ENCODE measurements at regions of chr2 and their contacts with region 1.

Region 1: GRCh38 chr2:98649135-98649991 is 41.0 kb downstream of the UNC50 start:
- DNase-seq: peak; percentile 93
- ATAC-seq: peak; percentile 99
- H3K4me3 Mint-ChIP-seq: no peak overlapping the region
- H3K27ac Mint-ChIP-seq: peak overlapping the region; percentile 88
- H3K4me1 Mint-ChIP-seq: peaks cover 63% of the 10 kb centered on the region
- H3K27me3 Mint-ChIP-seq: no peaks in the 10 kb centered on the region
- CTCF ChIP-seq: peak; percentile 90

Region 2: DNA sequence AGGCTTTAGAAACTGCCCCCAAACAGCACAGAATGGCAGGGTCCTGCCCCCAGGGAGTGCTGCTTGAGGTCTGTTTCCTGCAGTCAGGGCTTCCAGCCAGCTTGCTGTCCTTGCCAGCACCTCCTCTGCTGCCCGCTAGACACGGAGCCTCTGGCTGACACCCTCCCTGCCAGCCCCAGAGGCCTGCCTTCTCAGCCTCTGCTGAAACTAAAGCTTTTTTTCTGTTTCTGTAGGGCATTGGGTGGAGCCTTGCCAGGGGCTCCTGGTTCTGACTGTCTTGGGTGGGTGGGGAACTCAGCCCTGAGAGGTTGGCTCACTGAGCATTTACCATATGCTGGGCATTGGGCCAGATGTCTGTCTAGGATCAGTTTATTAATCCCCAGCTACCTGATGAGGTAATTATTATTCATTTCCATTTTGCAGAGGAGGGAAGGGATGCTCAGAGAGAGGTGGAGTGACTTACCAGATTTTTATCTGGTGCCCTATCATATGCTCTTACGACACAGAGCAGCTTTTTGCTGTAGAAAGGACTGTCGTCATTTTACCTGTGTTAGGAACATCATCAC is 169.3 kb before region 1 on chr2:
- CTCF ChIA-PET with region 1: no interaction called
- POLR2A ChIA-PET with region 1: no interaction called
- intact Hi-C with region 1: no loop called
- DNase-seq: peak; percentile 76
- ATAC-seq: peak; percentile 72
- H3K4me3 Mint-ChIP-seq: peak overlapping the region; percentile 30
- H3K27ac Mint-ChIP-seq: peak overlapping the region; percentile 91
- H3K4me1 Mint-ChIP-seq: peaks cover 98% of the 10 kb centered on the region
- H3K27me3 Mint-ChIP-seq: no peaks in the 10 kb centered on the region
- CTCF ChIP-seq: no peak

Region 3: GRCh38 chr2:98634401-98635092 is 14.8 kb before region 1 on chr2:
- CTCF ChIA-PET with region 1: interaction called, 21 read pairs
- POLR2A ChIA-PET with region 1: no interaction called
- intact Hi-C with region 1: no loop called
- DNase-seq: peak; percentile 81
- ATAC-seq: peak; percentile 70
- H3K4me3 Mint-ChIP-seq: peak overlapping the region; percentile 31
- H3K27ac Mint-ChIP-seq: peak overlapping the region; percentile 90
- H3K4me1 Mint-ChIP-seq: peaks cover 37% of the 10 kb centered on the region
- H3K27me3 Mint-ChIP-seq: no peaks in the 10 kb centered on the region
- CTCF ChIP-seq: peak; percentile 69

Region 4: DNA sequence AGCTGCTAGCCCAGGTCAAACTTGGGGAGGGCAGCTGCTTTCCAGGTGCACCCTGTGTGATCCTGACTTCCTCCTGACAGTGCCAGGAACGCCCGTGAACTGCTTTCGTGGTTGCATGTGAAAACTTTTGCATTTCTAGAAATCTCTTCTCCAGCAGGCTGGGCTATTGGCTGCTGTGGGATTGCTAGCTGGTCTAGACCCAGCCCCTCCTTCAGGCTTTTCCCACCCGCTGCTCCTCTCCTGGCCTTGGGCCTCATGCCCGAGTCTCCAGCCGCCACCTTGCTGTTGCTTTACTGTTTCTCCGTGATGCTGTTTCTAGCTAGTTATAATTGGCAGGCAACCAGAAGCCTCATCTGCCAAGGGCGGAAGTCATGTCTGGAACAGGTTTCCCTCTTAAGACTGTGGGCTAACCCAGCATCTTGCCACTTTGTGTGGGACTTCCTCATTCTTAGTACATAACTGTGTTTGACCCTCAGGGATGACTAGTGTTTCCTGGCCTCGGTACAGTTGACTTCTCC is 108.6 kb after region 1 on chr2:
- CTCF ChIA-PET with region 1: interaction called, 10 read pairs
- POLR2A ChIA-PET with region 1: interaction called, 4 read pairs
- intact Hi-C with region 1: no loop called
- DNase-seq: peak; percentile 73
- ATAC-seq: peak; percentile 69
- H3K4me3 Mint-ChIP-seq: peak overlapping the region; percentile 57
- H3K27ac Mint-ChIP-seq: peak overlapping the region; percentile 89
- H3K4me1 Mint-ChIP-seq: peaks cover 50% of the 10 kb centered on the region
- H3K27me3 Mint-ChIP-seq: no peaks in the 10 kb centered on the region
- CTCF ChIP-seq: no peak

Region 5: DNA sequence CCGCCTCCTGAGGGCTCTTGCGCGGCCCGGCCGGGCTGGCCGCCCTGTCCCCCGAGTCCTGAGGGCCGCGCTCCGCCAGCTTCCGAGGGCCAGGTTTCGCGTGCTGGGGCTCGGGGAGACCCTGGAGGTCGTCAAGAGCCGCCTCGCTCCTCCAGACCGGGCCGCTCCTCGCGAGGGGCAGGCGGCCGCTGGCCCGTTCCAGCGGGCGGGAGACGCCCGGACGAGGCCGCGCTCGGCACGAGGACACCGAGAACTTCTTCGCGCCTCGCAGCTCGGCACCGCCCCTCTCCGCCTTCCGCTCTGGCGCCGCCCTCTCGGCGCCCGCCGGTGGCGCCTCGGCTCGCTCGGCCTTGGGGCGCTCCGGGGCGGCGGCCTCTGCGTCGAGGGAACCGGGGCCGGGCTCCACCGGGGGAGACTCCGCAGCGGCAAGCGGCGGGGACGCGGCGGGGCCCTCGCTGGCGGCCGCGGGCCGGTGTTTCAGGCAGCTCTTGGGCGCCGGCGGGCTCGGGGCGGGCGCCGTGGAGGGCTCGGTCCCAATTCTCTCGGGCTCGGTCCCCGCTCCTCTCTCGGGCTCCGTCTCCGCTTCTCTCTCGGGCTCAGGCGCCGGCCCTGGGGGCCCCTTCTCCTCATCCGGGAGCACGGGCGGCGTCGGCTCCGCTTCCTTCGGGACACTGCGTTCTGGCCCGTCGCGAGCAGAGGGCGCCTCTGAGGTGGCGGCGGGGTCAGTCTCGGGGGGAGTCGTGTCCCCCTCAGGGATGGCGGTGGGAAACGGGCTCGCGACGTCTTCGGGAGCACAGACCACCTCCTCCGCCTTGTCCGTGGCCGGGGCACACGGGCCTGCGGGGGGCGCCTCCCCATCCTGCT is 173.2 kb after region 1 on chr2:
- CTCF ChIA-PET with region 1: interaction called, 19 read pairs
- POLR2A ChIA-PET with region 1: interaction called, 3 read pairs
- intact Hi-C with region 1: no loop called
- DNase-seq: peak; percentile 66
- ATAC-seq: peak; percentile 93
- H3K4me3 Mint-ChIP-seq: peak overlapping the region; percentile 47
- H3K27ac Mint-ChIP-seq: no peak overlapping the region
- H3K4me1 Mint-ChIP-seq: peaks cover 13% of the 10 kb centered on the region
- H3K27me3 Mint-ChIP-seq: peaks cover 2% of the 10 kb centered on the region
- CTCF ChIP-seq: peak; percentile 45

Region 6: DNA sequence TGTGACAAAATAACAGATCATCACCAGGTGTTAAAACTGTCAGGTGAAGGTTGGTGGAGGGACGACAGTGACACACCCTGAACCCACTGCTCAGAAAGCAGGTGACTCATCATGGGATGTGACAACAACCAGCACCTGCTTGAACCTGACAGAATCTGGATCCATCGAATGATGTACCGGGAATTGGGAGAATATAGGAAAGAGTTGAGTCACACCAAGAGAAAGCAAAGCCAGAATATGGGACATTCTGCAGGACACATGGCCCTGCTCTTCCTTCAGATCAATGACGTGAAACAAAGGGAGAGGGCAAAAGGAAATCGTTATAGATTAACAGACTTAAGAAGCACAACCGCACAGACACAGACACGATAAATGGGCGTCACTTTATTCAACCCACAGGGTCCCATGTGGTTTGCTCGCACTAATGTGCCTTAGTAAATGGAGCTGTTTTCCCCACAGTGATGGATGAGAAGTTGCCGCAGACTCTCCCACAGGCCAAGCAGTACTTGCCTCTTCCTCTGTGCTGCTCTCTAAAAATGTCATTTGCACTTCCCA is 186.5 kb after region 1 on chr2:
- CTCF ChIA-PET with region 1: interaction called, 18 read pairs
- POLR2A ChIA-PET with region 1: no interaction called
- intact Hi-C with region 1: loop called (anchors 2 kb)
- DNase-seq: peak; percentile 66
- ATAC-seq: peak; percentile 80
- H3K4me3 Mint-ChIP-seq: peak overlapping the region; percentile 28
- H3K27ac Mint-ChIP-seq: peak overlapping the region; percentile 74
- H3K4me1 Mint-ChIP-seq: peaks cover 36% of the 10 kb centered on the region
- H3K27me3 Mint-ChIP-seq: no peaks in the 10 kb centered on the region
- CTCF ChIP-seq: no peak

Measured in activated CD8-positive, alpha-beta T cell treated with anti-CD3 and anti-CD28 coated beads for 36 hours (primary cell).